Stomach (tissue), 19 donors: ENCODE measurements at regions of chr14 and their contacts with region 1.

Region 1: DNA sequence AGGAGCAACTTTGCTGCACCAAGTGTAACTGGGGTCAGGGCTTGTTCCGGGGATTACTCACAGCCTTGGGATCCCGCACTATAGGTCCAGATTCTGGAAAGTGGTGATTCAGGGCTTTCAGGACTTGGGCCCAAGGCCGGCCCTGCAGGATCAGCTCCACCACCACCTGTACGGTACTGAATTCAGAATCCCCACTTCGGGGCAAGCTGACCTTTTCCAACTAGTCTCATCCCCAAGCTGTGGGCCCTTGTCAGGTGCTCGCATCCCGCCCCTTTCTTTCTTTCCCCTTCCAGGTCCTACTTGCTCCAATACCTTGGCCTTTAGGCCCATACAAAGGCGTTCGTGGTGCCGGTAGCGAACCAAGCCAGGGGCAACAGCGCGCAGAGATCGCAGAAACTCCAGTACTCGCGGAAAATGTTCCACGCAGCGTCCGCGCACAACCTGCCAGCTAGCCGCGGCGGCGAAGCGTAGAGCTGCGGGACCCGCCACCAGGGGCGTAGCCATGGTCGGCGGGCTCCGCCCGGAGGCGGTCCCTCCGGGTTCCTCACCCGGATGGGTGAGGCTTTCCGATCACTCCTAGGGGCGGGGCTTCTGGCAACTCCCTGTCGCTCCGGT is 487 bp downstream of the TINF2 start:
- DNase-seq: peak; percentile 94 to 97
- H3K4me3 ChIP-seq: peak overlapping the region; percentile 65 to 84 (median 71)
- H3K27ac ChIP-seq: peak overlapping the region; percentile 92 to 100 (median 99)
- H3K4me1 ChIP-seq: peaks cover 35 to 59% (median 52%) of the 10 kb centered on the region in 4 donors
- H3K27me3 ChIP-seq: no peaks in the 10 kb centered on the region
- CTCF ChIP-seq: peak in 5 of 7 experiments; percentile 60 to 87 (median 75)
- EP300 ChIP-seq: no peak
- POLR2A ChIP-seq: no peak

Region 2: DNA sequence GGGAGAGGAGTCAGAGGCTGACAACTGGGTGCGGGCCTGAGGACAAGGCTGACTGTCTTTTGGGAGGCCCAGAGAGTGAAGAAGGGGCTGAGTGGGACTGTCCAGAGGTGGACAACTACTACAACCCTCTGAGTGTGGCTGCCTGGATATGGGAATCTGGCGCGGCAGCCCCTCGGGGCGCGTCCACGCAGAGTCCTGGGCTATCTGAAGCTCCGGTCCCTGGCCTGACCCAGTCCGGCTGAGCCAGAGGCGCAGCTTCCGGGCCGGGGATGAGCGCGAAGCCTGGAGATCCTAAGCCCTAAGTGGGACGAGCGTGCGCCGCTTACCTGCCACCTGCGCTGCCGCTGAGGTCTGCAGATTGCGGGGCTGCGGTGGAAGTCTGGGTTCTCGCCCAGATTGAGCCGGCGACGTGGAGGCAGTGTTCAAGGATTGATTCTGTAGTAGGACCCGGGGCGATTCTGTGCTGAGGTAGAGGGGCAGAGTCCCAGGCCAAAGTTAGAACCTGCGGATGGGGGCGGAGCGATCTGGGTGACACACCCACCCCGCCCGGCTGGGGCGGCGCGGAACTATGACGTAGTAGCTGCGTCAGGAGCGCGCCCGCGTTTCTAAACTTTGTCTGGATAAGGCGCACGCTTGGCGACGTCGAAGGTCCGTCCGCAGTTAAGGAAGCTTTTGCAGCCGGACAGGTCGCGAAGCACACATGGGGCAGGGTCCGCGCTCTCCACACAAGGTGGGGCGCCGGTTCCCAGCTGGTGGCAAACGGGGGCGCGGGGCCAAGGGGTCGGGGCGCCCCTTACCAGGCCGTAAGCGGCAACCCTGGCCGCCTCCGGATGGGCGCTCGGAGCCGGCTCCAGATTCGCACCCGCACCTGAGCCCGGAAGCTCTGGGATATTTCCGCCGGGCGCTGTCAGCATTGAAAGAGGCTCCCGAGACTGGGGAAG is 57.6 kb after region 1 on chr14 and contains the starts of genes DHRS1 and NOP9:
- intact Hi-C with region 1: loop called (anchors 10 kb)
- DNase-seq: peak; percentile 96 to 97
- H3K4me3 ChIP-seq: peak within 1 kb of the TSS; percentile 78 to 96 (median 89)
- H3K27ac ChIP-seq: peak within 1 kb of the TSS; percentile 88 to 94 (median 91)
- H3K4me1 ChIP-seq: peaks cover 20 to 63% (median 46%) of the 10 kb centered on the region in 4 donors
- H3K27me3 ChIP-seq: no peaks in the 10 kb centered on the region
- CTCF ChIP-seq: peak in 1 of 7 experiments; percentile 30
- EP300 ChIP-seq: peak; percentile 6
- POLR2A ChIP-seq: no peak
- total RNA-seq, gene DHRS1: 5.3 to 71.9 (median 17.4) TPM
- total RNA-seq, gene NOP9: 5.4 to 25.7 (median 12.8) TPM

Region 3: GRCh38 chr14:24377657-24378056 is 135.7 kb after region 1 on chr14:
- intact Hi-C with region 1: no loop called
- DNase-seq: peak in 1 of 2 donors; percentile 7
- H3K4me3 ChIP-seq: no peak overlapping the region
- H3K27ac ChIP-seq: no peak overlapping the region
- H3K4me1 ChIP-seq: no peaks in the 10 kb centered on the region
- H3K27me3 ChIP-seq: no peaks in the 10 kb centered on the region
- CTCF ChIP-seq: no peak
- EP300 ChIP-seq: no peak
- POLR2A ChIP-seq: no peak

Region 4: GRCh38 chr14:24481622-24482324 is 239.8 kb after region 1 on chr14:
- intact Hi-C with region 1: no loop called
- DNase-seq: peak; percentile 27 to 63
- H3K4me3 ChIP-seq: no peak overlapping the region
- H3K27ac ChIP-seq: no peak overlapping the region
- H3K4me1 ChIP-seq: peaks cover 0 to 4% (median 0%) of the 10 kb centered on the region in 4 donors
- H3K27me3 ChIP-seq: no peaks in the 10 kb centered on the region
- CTCF ChIP-seq: peak in 4 of 7 experiments; percentile 11 to 36 (median 16)
- EP300 ChIP-seq: no peak
- POLR2A ChIP-seq: no peak